ENCODE measurements at regions of chr18 and their contacts with region 1.

Region 1: DNA sequence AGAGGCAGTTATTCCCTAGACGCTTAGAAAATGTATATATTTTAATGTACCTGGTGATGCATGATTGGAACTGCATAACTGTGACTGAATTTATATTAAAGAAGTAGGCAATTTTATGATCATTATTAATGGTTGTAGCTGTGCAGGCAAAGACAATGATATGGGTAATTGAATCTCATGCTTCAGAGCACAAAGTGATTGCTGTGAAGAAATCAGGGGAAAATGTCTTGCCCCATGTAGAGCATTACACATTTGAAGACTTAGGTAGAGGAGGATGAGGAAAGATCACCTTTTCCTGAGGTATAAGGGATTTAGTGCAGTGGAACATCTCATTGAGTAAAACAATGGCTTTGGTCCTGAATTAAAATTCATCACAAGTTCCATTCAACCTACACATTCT is 246.8 kb upstream of the DCC start:
- DNase-seq: no peak
- H3K4me3 ChIP-seq: no peak overlapping the region
- H3K27ac ChIP-seq: no peak overlapping the region
- H3K4me1 ChIP-seq: no peaks in the 10 kb centered on the region
- H3K27me3 ChIP-seq: no peaks in the 10 kb centered on the region
- CTCF ChIP-seq: no peak

Region 2: GRCh38 chr18:52054324-52054723 is 38.8 kb before region 1 on chr18:
- CTCF ChIA-PET with region 1: no interaction called
- dilution Hi-C with region 1: no loop called
- in situ Hi-C with region 1: no loop called
- intact Hi-C with region 1: no loop called
- DNase-seq: peak; percentile 85
- H3K4me3 ChIP-seq: no peak overlapping the region
- H3K27ac ChIP-seq: peak overlapping the region; percentile 29
- H3K4me1 ChIP-seq: peaks cover 9% of the 10 kb centered on the region
- H3K27me3 ChIP-seq: no peaks in the 10 kb centered on the region
- CTCF ChIP-seq: no peak

Region 3: DNA sequence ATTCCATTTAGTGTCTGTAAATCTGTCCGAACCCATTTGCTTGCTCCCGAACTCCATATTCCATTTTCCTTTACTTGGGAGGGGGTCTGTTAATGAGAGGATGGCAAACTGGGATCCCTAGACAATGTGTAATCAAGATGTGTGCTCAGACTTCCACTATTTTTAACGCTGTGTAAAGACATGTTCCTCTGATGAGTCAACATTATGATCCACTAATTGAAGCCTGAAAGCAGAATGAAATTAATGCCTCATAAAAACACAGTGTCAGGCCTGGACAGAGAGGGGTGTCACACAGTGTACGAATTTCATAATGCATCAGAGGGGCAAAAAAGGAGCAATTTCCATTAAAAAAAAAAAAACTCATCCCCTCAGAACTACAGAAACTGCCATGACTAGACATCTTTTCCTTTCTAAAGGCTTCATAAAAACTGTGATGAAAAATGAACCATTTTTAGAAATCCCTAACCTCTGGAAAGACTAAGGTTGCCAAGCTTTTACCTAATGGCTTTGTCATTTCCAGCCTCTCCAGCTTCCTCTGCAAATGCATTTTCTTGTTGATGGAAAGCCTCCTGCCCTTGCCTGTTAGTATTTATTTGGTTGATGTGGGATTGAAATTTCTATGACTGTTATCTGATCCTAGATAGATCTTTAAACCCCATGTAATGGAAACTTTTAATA is 37.6 kb after region 1 on chr18:
- CTCF ChIA-PET with region 1: no interaction called
- dilution Hi-C with region 1: no loop called
- in situ Hi-C with region 1: no loop called
- intact Hi-C with region 1: loop called (anchors 1 kb)
- DNase-seq: peak; percentile 64
- H3K4me3 ChIP-seq: no peak overlapping the region
- H3K27ac ChIP-seq: peak overlapping the region; percentile 9
- H3K4me1 ChIP-seq: peaks cover 17% of the 10 kb centered on the region
- H3K27me3 ChIP-seq: no peaks in the 10 kb centered on the region
- CTCF ChIP-seq: no peak

Measured in mammary epithelial cell (primary cell).